Activated CD4-positive, alpha-beta T cell treated with anti-CD3 and anti-CD28 coated beads, Interleukin-2, amount 10 ng/mL, durations not matched to agents 7 days and 5 days (primary cell): ENCODE measurements at regions of chr16 and their contacts with region 1.

Region 1: GRCh38 chr16:67428146-67428731 is 2.7 kb upstream of the HSD11B2 start:
- DNase-seq: peak; percentile 64
- H3K4me3 Mint-ChIP-seq: no peak overlapping the region
- H3K27ac Mint-ChIP-seq: no peak overlapping the region
- H3K4me1 Mint-ChIP-seq: peaks cover 8% of the 10 kb centered on the region
- H3K27me3 Mint-ChIP-seq: peaks cover 50% of the 10 kb centered on the region

Region 2: GRCh38 chr16:67441271-67441753 is 13.1 kb after region 1 on chr16:
- CTCF ChIA-PET with region 1: interaction called, 29 read pairs
- POLR2A ChIA-PET with region 1: no interaction called
- DNase-seq: no peak
- H3K4me3 Mint-ChIP-seq: no peak overlapping the region
- H3K27ac Mint-ChIP-seq: no peak overlapping the region
- H3K4me1 Mint-ChIP-seq: no peaks in the 10 kb centered on the region
- H3K27me3 Mint-ChIP-seq: no peaks in the 10 kb centered on the region